Activated CD4-positive, alpha-beta memory T cell treated with anti-CD3 and anti-CD28 coated beads, Interleukin-2, amount 10 ng/mL, durations not matched to agents 7 days and 5 days (primary cell): ENCODE measurements at regions of chr15 and their contacts with region 1.

Region 1: DNA sequence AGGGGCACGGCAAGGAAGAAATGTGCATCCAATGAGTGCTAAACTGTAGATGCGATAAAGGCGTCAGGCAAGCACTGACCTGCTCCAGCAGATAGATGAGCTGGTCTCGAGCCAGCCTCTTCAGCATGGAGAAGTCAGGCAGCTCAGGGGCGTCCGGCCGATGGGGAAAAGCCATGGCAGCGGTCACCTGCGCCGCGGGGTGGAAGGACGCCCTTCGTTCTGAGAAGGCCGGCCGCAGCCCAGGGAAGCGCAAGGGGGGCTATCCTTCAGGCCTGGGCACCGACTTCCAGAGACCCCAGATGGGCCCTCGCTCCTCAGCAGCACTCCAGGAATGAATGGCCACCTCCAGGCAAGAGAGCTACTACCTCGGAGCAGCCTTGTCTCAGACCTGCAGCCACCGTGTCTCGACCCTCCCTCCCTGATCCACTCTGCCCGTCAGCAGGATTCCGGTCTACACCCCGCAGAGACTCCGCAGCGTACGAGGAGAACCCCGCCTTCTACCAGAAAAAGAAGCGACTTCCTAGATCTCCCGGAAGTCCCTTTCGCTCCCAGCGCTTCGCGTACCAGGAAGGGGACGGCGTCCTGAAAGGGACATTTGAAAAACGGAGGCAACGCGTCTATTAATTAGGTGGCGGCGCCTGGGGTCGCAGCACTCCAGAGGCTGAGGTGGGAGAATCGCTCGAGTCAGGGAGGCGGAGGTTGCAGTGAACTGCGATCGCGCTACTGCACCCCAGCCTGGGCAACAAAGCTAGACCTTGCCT is at the start of gene VPS33B:
- DNase-seq: peak; percentile 81
- H3K4me3 Mint-ChIP-seq: peak within 1 kb of the TSS; percentile 89
- H3K27ac Mint-ChIP-seq: peak within 1 kb of the TSS; percentile 85
- H3K4me1 Mint-ChIP-seq: peaks cover 46% of the 10 kb centered on the region
- H3K27me3 Mint-ChIP-seq: no peaks in the 10 kb centered on the region
- total RNA-seq, gene VPS33B: 20.8 to 23.5 TPM

Region 2: GRCh38 chr15:90994417-90995311 is 27.6 kb before region 1 on chr15 and contains the start of gene PRC1:
- CTCF ChIA-PET with region 1: interaction called, 3 read pairs
- POLR2A ChIA-PET with region 1: interaction called, 20 read pairs
- DNase-seq: peak; percentile 98
- H3K4me3 Mint-ChIP-seq: peak within 1 kb of the TSS; percentile 100
- H3K27ac Mint-ChIP-seq: peak within 1 kb of the TSS; percentile 100
- H3K4me1 Mint-ChIP-seq: peaks cover 40% of the 10 kb centered on the region
- H3K27me3 Mint-ChIP-seq: no peaks in the 10 kb centered on the region
- total RNA-seq, gene PRC1: 158 to 167 TPM

Region 3: DNA sequence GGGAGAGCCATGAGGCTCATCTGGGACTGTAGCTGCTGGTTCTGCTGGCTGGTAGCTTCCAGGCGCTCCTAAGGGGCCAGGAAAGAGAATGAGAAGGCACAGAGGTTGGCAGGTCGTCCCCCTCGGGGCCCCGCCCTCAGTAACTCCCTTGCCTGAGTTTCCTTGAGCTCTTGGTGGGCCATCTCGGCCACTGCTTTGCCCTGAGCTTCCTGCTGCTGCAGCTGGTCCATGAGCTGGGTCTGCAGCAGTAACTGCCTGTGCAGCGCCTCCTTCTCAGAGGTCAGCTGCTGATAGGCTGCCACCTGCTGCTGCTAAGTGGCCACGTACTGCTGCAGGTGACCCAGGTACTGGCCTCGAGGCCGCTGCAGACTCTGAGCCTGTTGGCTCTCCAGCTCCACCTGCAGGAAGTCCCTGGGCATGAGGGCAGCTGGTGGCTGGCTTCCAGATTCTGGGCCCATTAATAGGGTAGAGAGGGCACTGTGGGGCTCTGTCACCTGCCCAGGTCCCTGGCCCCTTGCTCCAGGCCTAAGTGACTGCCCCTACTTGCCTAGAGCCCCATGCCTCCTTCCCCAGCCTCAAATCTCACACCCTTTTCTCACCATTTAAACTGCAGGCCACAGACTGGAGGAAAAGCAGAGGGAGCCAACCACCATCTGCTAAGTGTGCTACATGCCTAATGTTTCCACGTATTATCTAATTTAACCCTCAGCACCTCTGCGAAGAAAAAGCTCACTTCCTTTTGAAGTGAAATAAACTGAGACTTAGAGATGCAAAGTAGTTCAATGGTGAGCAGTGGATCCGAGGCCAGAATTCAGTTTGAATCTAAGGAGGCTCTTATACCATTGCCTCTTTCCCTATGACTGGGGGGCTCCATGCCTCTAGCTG is 10.9 kb after region 1 on chr15:
- CTCF ChIA-PET with region 1: interaction called, 23 read pairs
- POLR2A ChIA-PET with region 1: interaction called, 8 read pairs
- DNase-seq: peak; percentile 69
- H3K4me3 Mint-ChIP-seq: no peak overlapping the region
- H3K27ac Mint-ChIP-seq: no peak overlapping the region
- H3K4me1 Mint-ChIP-seq: peaks cover 4% of the 10 kb centered on the region
- H3K27me3 Mint-ChIP-seq: peaks cover 5% of the 10 kb centered on the region